ENCODE measurements at regions of chr1 and their contacts with region 1.

Region 1: DNA sequence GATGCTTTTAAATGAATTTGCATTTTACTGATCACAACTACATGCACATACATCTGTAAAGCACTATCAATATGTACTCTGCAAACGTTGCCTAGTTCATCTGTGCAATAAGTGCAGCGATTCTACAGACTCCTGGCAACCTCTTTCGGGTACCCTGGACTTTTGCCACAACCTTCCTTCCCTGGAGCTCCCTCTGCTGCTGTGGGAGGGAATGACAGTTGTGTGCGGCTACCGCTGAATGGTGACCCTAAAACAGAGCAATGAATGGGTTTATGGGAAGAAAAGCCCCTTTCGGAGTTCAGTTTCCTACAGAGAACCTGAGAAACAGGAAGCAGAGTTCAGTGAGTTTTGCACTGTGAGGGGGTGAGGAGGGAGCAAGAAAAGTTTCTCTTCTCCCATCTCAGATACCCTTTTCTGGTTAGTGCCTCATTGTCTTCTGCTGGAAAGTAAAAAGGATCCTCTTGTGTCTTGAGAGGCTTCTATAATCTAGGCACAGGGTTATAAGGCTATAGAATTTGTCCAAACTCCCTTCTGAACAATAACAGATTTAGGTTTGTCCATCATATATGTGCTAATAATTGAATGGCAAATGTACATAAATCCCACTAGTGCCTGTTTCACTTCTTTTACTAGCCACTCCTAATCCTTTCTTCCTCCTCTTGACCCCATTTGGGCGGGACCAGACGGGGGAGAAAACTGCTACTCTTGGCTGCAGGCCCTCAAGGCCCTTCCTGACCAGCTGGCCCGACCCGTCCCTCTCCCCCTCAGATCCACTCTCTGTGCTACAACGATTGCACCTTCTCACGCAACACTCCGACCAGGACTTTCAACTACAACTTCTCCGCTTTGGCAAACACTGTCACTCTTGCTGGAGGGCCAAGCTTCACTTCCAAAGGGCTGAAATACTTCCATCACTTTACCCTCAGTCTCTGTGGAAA is 19.8 kb upstream of the SARS1 start:
- DNase-seq: peak; percentile 83 to 87 (median 84)
- ATAC-seq: peak; percentile 69
- H3K4me3 ChIP-seq: no peak overlapping the region
- H3K27ac ChIP-seq: no peak overlapping the region
- H3K4me1 ChIP-seq: peaks cover 19 to 50% of the 10 kb centered on the region in 2 experiments
- H3K27me3 ChIP-seq: no peaks in the 10 kb centered on the region
- CTCF ChIP-seq: peak; percentile 93 to 98 (median 94)
- EP300 ChIP-seq: no peak
- POLR2A ChIP-seq: no peak
- RAD21 ChIP-seq: peak; percentile 86 to 89

Region 2: DNA sequence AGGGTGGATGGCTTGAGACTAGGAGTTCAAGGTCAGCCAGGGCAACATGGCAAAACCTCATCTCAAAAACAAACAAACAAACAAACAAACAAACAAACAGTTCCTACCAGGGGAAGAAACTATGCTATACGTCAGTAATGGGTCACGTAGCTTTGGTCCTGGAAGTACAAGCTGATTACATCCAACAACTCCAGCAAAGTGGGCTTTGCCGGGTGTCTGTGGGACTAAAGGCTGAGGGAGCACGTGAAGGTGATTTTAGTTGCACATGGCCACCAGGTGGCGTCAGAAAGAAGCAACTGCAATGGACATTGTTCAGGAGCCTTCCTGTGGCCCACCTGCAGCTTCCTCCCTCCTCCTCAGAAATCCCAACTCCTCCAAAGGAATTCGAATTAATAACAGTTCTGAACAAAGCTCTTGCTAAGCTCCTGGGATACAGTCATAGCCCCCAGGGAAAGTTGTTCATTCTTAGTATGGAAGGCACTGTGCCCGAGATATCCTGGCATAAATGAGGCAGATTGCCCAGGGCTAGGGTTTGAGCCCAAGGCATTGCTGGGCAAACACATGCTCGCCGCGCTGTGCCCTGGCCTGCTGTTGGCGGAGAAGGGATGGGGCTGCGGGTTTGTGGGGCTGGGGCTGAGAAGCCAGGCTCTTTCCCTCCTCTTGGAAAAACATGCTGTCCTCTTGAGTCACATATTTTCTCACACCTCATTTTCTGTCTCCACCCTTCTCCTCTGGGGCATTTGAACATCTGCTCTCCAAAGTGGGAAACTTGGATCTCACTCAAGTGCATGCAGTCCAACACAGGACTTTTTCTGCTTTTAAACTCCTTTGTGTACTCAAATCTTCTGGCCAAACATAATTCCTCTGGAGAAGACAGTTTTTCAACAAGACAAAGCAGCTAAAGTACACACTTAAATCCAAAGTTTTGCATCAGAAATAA is 365.6 kb before region 1 on chr1:
- CTCF ChIA-PET with region 1: no interaction called
- POLR2A ChIA-PET with region 1: no interaction called
- in situ Hi-C with region 1: no loop called
- intact Hi-C with region 1: loop called (anchors 5 kb)
- DNase-seq: peak; percentile 78 to 90 (median 80)
- ATAC-seq: peak; percentile 88
- H3K4me3 ChIP-seq: no peak overlapping the region
- H3K27ac ChIP-seq: no peak overlapping the region
- H3K4me1 ChIP-seq: peaks cover 3 to 4% of the 10 kb centered on the region in 2 experiments; a peak in 3 of 5 replicates
- H3K27me3 ChIP-seq: no peaks in the 10 kb centered on the region
- CTCF ChIP-seq: peak; percentile 86 to 92 (median 87)
- EP300 ChIP-seq: no peak
- POLR2A ChIP-seq: no peak
- RAD21 ChIP-seq: peak; percentile 75 to 92

Region 3: DNA sequence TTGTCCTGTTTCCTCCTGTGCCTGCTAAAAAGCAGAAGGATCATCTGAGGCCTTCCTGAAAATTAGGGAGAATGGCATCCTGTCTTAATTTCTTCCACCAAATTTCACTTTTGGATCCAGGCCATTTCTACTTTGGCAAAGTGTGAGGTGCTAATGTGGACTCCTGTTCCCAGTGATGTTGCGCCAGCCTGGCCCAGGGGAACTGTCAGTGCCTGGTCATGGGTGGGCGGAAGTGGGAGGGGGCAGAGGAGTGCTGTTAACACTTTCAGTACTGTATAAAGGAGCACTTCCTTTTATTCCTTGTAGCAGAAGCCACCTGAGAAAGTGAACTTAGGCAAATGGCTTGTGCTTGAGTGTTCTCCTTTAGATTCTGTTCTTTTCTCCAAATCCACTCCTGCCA is 60.1 kb before region 1 on chr1:
- CTCF ChIA-PET with region 1: no interaction called
- POLR2A ChIA-PET with region 1: interaction called, 3 read pairs
- in situ Hi-C with region 1: no loop called
- intact Hi-C with region 1: loop called (anchors 5 kb)
- DNase-seq: no peak
- ATAC-seq: no peak
- H3K4me3 ChIP-seq: no peak overlapping the region
- H3K27ac ChIP-seq: no peak overlapping the region
- H3K4me1 ChIP-seq: peaks cover 27 to 32% of the 10 kb centered on the region in 2 experiments; a peak in 3 of 5 replicates
- H3K27me3 ChIP-seq: no peaks in the 10 kb centered on the region
- CTCF ChIP-seq: no peak
- EP300 ChIP-seq: no peak
- POLR2A ChIP-seq: no peak
- RAD21 ChIP-seq: no peak

Region 4: GRCh38 chr1:109181105-109181806 is 12.7 kb before region 1 on chr1:
- CTCF ChIA-PET with region 1: no interaction called
- POLR2A ChIA-PET with region 1: interaction called, 10 read pairs
- in situ Hi-C with region 1: no loop called
- intact Hi-C with region 1: no loop called
- DNase-seq: peak; percentile 40 to 90 (median 64)
- ATAC-seq: peak; percentile 81
- H3K4me3 ChIP-seq: no peak overlapping the region
- H3K27ac ChIP-seq: peak overlapping the region; percentile 42
- H3K4me1 ChIP-seq: peaks cover 26 to 28% of the 10 kb centered on the region in 2 experiments
- H3K27me3 ChIP-seq: no peaks in the 10 kb centered on the region
- CTCF ChIP-seq: no peak
- EP300 ChIP-seq: peak; percentile 75; the same call in 1 of the 2 replicates
- POLR2A ChIP-seq: no peak
- RAD21 ChIP-seq: no peak